ENCODE measurements at regions of chr12 and their contacts with region 1.

Region 1: GRCh38 chr12:42677461-42677860 is 87.9 kb upstream of the PRICKLE1 start:
- DNase-seq: no peak
- H3K4me3 ChIP-seq: no peak overlapping the region
- H3K27ac ChIP-seq: no peak overlapping the region
- H3K4me1 ChIP-seq: no peaks in the 10 kb centered on the region
- H3K27me3 ChIP-seq: no peaks in the 10 kb centered on the region
- CTCF ChIP-seq: no peak
- POLR2A ChIP-seq: no peak

Region 2: DNA sequence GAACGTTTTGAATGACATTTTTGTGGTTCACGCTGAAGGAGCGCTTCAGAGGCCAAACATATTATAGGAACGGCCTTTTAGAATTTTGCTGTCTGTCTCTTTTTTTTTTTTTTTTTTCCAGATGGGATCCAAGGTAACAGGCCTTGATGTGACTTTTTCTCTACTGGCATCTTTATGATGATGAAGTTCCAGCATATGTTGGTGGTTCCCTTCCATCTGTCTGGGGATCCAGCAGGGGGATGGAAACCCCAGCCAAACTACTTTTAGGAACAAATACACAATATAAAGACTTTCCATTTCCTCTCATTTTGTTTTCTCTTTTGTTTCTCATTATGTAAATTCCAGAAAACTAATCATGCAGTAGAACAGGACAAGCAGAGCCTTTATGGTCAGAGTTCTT is 151.4 kb after region 1 on chr12:
- intact Hi-C with region 1: loop called (anchors 2 kb)
- DNase-seq: no peak
- H3K4me3 ChIP-seq: no peak overlapping the region
- H3K27ac ChIP-seq: no peak overlapping the region
- H3K4me1 ChIP-seq: no peaks in the 10 kb centered on the region
- H3K27me3 ChIP-seq: no peaks in the 10 kb centered on the region
- CTCF ChIP-seq: no peak
- POLR2A ChIP-seq: no peak

Region 3: GRCh38 chr12:42969357-42969756 is 291.9 kb after region 1 on chr12:
- intact Hi-C with region 1: no loop called
- DNase-seq: no peak
- H3K4me3 ChIP-seq: no peak overlapping the region
- H3K27ac ChIP-seq: no peak overlapping the region
- H3K4me1 ChIP-seq: no peaks in the 10 kb centered on the region
- H3K27me3 ChIP-seq: no peaks in the 10 kb centered on the region
- CTCF ChIP-seq: no peak
- POLR2A ChIP-seq: no peak